ENCODE measurements at regions of chr14 and their contacts with region 1.

Region 1: DNA sequence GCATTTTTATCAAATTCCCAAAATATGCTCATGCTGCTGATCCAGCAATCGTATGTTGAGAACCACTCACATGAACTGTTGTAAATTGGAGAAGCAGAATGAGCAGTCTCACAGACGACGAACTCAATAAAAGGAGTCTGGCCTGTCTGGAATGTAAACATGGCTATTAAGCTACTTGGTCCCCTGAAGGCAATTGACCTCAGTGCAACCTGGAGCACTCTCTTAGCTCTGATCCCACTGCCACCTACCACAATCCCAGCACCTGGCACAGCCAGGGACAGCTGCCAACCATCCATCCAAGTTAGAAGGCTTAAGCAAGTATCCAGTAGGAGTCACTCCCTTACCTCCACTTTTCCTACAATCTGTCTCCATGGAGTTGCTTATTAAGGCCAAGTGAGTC is 406.9 kb upstream of the CLEC14A start:
- DNase-seq: no peak
- ATAC-seq: no peak
- H3K4me3 ChIP-seq: no peak overlapping the region
- H3K27ac ChIP-seq: no peak overlapping the region
- H3K4me1 ChIP-seq: no peaks in the 10 kb centered on the region
- H3K27me3 ChIP-seq: no peaks in the 10 kb centered on the region
- CTCF ChIP-seq: no peak

Region 2: DNA sequence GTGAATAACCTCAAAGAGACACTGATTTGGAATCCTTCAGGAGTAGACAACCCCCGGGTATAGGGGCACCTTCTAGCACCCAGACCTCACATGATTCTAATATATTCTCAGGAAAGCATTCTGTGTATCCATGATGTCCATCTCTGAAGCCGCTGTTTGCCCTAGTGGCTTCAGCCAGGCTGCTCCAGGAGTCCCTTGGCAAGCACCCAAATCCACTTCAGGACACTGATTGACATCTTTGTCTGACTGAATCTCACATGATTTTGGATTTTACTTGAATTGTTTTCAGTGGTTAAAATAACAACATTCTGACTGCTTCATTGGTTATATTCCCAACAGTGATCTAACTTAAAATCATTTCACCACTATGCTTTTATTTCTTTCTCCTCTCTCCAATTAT is 16.4 kb before region 1 on chr14:
- intact Hi-C with region 1: loop called in 1 of 10 experiments (anchors 2 kb)
- DNase-seq: no peak
- ATAC-seq: no peak
- H3K4me3 ChIP-seq: no peak overlapping the region
- H3K27ac ChIP-seq: no peak overlapping the region
- H3K4me1 ChIP-seq: no peaks in the 10 kb centered on the region
- H3K27me3 ChIP-seq: no peaks in the 10 kb centered on the region
- CTCF ChIP-seq: no peak